ENCODE measurements at regions of chr9 and their contacts with region 1.

Region 1: DNA sequence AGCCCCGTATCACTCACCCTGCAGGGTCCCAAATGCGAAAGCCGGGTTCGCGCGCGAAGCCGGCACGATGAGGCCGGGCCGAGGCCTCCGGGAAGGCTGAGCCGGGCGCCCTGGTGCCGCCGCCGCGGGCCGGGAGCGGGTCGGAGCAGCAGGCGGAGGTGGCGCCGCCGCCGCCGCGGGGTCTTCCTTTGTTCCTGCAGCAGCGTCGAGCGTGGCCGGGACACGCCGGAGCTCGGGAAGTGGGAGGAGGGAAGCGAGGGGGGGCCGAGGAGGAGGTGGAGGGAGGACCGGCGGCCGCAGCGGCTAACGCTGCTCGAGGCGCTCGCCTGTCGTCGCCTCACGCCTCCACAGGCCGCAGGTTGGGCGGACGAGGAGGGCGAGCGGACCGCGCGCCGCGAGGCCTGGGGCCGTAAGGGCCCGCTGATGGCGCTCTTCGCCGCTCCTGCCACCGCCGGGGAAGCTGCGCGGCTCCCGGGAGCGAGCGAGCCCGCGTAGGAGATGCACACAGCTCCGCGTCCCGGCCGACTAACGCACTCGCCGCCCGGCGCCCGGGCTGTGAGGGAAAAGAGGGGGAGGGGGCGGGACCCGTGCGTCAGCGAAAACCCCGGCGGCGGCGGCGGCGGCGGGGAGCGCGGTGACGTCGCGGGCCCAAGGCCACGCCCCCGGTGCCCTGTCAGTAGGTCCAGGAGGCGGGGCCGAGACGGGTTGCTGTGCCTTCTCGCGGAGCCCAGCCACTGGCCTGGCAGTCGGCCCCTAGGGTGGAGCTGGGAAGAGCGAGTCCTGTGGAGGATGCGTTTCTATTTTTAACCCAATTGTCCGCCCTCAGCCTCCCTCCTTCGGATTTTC is at the start of gene ZFAND5:
- DNase-seq: peak; percentile 89
- H3K4me3 Mint-ChIP-seq: peak within 1 kb of the TSS; percentile 97
- H3K27ac Mint-ChIP-seq: peak within 1 kb of the TSS; percentile 97
- H3K4me1 Mint-ChIP-seq: peaks cover 42% of the 10 kb centered on the region
- H3K27me3 Mint-ChIP-seq: no peaks in the 10 kb centered on the region
- total RNA-seq, gene ZFAND5: 131 and 133 TPM in 2 replicates

Region 2: GRCh38 chr9:71783120-71783530 is 581.8 kb before region 1 on chr9:
- intact Hi-C with region 1: loop called (anchors 5 kb)
- DNase-seq: peak; percentile 80
- H3K4me3 Mint-ChIP-seq: peak overlapping the region; percentile 63
- H3K27ac Mint-ChIP-seq: peak overlapping the region; percentile 93
- H3K4me1 Mint-ChIP-seq: peaks cover 42% of the 10 kb centered on the region
- H3K27me3 Mint-ChIP-seq: peaks cover 2% of the 10 kb centered on the region

Region 3: GRCh38 chr9:72292256-72292682 is 72.6 kb before region 1 on chr9:
- intact Hi-C with region 1: loop called (anchors 2 kb)
- DNase-seq: no peak
- H3K4me3 Mint-ChIP-seq: no peak overlapping the region
- H3K27ac Mint-ChIP-seq: no peak overlapping the region
- H3K4me1 Mint-ChIP-seq: peaks cover 6% of the 10 kb centered on the region
- H3K27me3 Mint-ChIP-seq: peaks cover 18% of the 10 kb centered on the region

Region 4: DNA sequence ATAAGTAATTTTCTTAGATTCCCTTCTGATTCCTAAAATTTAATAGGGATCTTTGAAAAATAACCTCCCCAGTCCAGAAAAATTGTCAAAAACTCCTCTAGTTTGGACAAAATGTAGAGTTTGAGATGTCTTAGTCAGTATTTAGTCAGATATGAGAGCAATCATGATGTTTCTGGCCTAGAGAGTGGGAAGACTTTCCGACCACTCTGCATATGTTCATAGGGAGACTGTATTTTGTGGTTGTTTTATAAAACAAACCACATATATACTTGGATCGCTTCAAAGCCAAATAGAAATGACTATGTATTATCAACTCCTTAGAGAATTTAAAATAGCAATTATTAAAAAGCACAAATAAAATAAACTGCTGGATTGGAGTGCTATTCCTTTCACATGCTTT is 15.7 kb before region 1 on chr9:
- intact Hi-C with region 1: loop called (anchors 1 kb)
- DNase-seq: no peak
- H3K4me3 Mint-ChIP-seq: no peak overlapping the region
- H3K27ac Mint-ChIP-seq: peak overlapping the region; percentile 26
- H3K4me1 Mint-ChIP-seq: peaks cover 21% of the 10 kb centered on the region
- H3K27me3 Mint-ChIP-seq: no peaks in the 10 kb centered on the region

Region 5: GRCh38 chr9:72396247-72397091 is 31.6 kb after region 1 on chr9:
- intact Hi-C with region 1: no loop called
- DNase-seq: no peak
- H3K4me3 Mint-ChIP-seq: no peak overlapping the region
- H3K27ac Mint-ChIP-seq: no peak overlapping the region
- H3K4me1 Mint-ChIP-seq: no peaks in the 10 kb centered on the region
- H3K27me3 Mint-ChIP-seq: peaks cover 1% of the 10 kb centered on the region

Region 6: DNA sequence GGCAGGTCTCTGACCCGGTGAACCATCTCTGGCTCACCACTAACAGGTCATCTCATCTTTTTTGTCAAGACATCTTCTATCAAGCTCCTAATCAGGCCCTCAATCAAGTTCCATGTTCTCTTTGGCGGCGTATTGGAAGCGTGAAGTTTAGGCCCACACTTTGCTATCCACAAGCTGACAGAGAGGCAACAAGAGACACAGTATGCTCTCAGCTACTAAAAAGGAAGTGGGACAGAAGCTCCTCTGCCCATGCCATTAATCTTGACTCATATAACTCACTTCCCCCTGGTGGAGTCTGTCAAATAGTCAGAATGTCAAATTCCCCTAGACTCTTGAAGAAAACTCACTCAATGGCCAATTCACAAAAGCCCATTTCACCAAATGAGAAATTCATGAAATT is 79.0 kb after region 1 on chr9:
- intact Hi-C with region 1: loop called (anchors 1 kb)
- DNase-seq: peak; percentile 8
- H3K4me3 Mint-ChIP-seq: peak overlapping the region; percentile 20
- H3K27ac Mint-ChIP-seq: peak overlapping the region; percentile 85
- H3K4me1 Mint-ChIP-seq: peaks cover 43% of the 10 kb centered on the region
- H3K27me3 Mint-ChIP-seq: no peaks in the 10 kb centered on the region

Region 7: DNA sequence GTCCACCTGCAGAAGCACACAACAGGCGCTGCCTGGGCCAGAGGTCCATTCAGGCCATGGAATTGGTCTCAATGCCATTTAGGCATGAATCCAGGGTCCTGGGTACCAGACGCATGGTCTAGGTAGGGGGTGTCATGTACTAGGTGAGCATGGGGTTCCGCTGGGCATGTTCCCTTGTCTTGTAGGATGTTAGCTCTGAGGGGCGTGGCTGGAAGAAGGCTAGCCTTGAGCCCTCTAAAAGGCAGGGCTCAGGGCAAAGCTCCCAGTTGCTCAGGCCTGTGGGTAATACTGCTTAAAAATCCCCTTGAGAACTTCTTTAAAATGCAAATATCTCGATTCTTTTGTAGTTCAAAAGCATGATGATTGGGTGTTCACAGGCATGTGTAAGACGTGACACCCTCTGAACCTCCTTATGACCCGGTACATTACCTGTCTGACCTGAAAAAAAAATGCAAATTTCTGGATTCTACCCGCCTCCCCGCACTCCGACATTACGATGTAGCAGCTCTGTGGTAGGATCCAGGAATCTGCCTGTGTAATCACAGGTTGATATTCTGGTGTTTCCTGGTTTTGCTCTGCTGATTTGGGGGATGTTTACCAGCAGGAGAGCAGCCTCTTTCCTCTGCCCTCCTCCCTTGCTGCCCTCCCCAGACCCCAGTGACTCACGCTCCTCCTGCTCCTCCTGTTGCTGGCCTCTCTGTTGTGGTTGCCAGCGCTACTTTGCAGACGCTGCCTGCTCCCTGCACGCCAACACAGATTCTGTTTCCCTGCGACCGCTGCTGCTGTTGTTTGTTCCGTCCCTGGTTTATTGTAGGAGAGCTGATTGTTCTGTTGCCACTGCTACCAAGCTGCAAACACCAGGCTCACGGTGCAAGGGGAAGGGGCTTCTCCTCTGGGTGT is 162.2 kb after region 1 on chr9:
- intact Hi-C with region 1: loop called (anchors 1 kb)
- DNase-seq: peak; percentile 75
- H3K4me3 Mint-ChIP-seq: peak overlapping the region; percentile 69
- H3K27ac Mint-ChIP-seq: peak overlapping the region; percentile 95
- H3K4me1 Mint-ChIP-seq: peaks cover 66% of the 10 kb centered on the region
- H3K27me3 Mint-ChIP-seq: no peaks in the 10 kb centered on the region

Region 8: DNA sequence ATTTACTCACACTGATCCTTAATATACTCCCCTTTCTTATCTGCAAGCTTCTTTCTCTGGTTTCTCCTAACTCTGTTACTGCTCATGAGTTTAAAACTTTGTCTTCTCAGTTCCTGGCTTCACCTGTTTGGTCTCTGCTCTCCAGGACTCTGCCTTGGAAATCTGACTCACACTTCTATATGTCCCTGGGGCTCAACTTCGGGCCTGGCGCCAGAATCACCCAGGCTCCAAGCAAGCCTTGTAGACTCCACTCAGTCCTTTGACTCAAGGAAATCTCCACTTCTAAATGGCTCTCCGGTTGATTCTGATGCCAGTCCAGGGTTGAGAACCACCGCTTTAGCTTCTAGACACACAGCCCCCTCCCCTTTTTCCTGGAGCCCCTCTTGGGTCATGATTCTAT is 214.3 kb after region 1 on chr9:
- intact Hi-C with region 1: no loop called
- DNase-seq: no peak
- H3K4me3 Mint-ChIP-seq: no peak overlapping the region
- H3K27ac Mint-ChIP-seq: no peak overlapping the region
- H3K4me1 Mint-ChIP-seq: peaks cover 40% of the 10 kb centered on the region
- H3K27me3 Mint-ChIP-seq: no peaks in the 10 kb centered on the region

Region 9: GRCh38 chr9:72592502-72593403 is 227.9 kb after region 1 on chr9:
- intact Hi-C with region 1: loop called (anchors 1 kb)
- DNase-seq: peak; percentile 13
- H3K4me3 Mint-ChIP-seq: no peak overlapping the region
- H3K27ac Mint-ChIP-seq: no peak overlapping the region
- H3K4me1 Mint-ChIP-seq: peaks cover 46% of the 10 kb centered on the region
- H3K27me3 Mint-ChIP-seq: peaks cover 3% of the 10 kb centered on the region

Region 10: GRCh38 chr9:72680593-72681282 is 315.8 kb after region 1 on chr9:
- intact Hi-C with region 1: no loop called
- DNase-seq: no peak
- H3K4me3 Mint-ChIP-seq: no peak overlapping the region
- H3K27ac Mint-ChIP-seq: no peak overlapping the region
- H3K4me1 Mint-ChIP-seq: no peaks in the 10 kb centered on the region
- H3K27me3 Mint-ChIP-seq: peaks cover 12% of the 10 kb centered on the region